Naive thymus-derived CD8-positive, alpha-beta T cell (primary cell): ENCODE measurements at regions of chrX and their contacts with region 1.

Region 1: DNA sequence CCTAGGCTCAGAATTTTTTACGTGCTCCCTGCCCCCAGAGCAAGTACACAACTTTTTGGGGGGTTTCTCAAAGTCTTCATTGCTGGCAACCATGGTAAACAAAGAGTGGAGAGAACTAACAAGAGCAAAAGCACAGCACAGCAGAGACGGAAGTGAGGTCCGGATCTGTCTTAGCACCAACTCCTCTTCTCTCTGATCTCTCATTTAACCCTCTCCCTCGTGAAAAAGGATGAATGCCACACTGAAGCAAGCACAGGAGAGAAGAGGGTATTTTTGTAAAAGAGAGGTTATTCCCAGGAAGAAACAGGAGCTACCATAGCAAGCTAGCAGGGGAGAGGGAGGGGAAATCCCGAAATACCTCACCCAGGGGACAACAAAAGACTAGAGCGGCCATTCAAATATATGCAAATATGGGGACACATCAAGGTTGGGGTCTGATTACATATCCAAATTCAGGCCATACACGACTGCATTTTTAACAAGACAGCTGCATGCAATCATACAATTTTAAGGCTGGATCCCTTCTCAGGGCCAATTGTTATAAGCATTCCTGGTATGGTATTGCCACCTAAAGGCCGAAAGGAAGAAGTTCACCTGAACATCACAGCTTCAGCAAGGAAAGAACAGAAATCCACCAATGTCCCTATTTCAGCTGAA is 46.6 kb downstream of the CD40LG start:
- DNase-seq: peak in 8 of 10 donors; percentile 23 to 64 (median 44)
- ATAC-seq: peak; percentile 74 to 80
- H3K4me3 Mint-ChIP-seq: peak overlapping the region; percentile 46 to 76 (median 69)
- H3K27ac Mint-ChIP-seq: peak overlapping the region; percentile 89 to 98 (median 97)
- H3K4me1 Mint-ChIP-seq: peaks cover 19 to 76% (median 55%) of the 10 kb centered on the region in 4 donors
- H3K27me3 Mint-ChIP-seq: no peaks in the 10 kb centered on the region

Region 2: DNA sequence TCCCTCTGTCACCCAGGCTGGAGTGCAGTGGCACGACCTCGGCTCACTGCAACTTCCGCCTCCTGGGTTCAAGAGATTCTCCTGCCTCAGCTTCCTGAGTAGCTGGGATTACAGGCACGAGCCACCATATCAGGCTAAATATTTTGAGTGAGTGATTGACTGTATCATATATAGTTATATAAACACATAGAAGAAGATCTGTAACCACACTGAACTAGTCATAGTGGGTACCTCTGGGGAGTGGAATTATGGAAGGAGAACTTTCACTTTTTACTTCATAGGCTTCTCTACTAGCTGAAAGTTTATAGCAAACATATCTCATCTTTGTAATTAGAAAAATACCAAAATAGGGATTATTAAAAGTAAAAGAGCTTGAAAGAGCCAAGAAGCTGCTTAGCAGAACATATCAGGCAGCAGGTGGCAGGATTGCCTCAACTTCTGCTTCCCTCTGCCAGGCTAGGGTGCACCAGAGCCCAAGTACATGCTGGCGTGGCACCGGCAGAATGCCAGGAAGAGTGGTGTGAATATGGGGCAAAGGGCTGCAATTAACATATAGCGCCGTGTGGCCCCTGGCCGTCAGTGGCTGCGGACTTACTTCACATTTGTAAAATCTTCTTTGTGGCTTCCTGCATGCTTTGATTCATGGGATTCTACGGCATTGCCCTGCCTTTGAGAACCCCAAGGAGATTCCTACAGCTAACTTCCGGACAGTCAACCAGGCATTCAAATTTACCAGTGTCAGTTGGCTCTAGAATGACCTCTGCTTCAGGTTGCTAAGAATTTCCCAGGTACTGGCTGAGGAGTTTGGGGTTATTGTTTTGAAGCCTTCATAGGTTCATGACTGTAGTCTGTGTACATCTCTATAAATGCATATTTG is 86.0 kb before region 1 on chrX:
- POLR2A ChIA-PET with region 1: interaction called, 12 read pairs
- DNase-seq: peak in 9 of 10 donors; percentile 15 to 77 (median 53)
- ATAC-seq: peak; percentile 71 to 77
- H3K4me3 Mint-ChIP-seq: peak overlapping the region in 2 of 10 donors; percentile 9 to 41
- H3K27ac Mint-ChIP-seq: peak overlapping the region in 7 of 10 donors; percentile 6 to 79 (median 38)
- H3K4me1 Mint-ChIP-seq: peaks cover 6 to 29% (median 23%) of the 10 kb centered on the region in 4 donors
- H3K27me3 Mint-ChIP-seq: no peaks in the 10 kb centered on the region

Region 3: GRCh38 chrX:136759968-136760367 is 65.4 kb after region 1 on chrX:
- POLR2A ChIA-PET with region 1: no interaction called
- DNase-seq: no peak
- ATAC-seq: peak; percentile 49 to 73
- H3K4me3 Mint-ChIP-seq: peak overlapping the region in 6 of 10 donors; percentile 3 to 55 (median 22)
- H3K27ac Mint-ChIP-seq: peak overlapping the region; percentile 7 to 90 (median 55)
- H3K4me1 Mint-ChIP-seq: peaks cover 12 to 70% (median 55%) of the 10 kb centered on the region in 4 donors
- H3K27me3 Mint-ChIP-seq: no peaks in the 10 kb centered on the region